ENCODE measurements at regions of chrX and their contacts with region 1.

Region 1: DNA sequence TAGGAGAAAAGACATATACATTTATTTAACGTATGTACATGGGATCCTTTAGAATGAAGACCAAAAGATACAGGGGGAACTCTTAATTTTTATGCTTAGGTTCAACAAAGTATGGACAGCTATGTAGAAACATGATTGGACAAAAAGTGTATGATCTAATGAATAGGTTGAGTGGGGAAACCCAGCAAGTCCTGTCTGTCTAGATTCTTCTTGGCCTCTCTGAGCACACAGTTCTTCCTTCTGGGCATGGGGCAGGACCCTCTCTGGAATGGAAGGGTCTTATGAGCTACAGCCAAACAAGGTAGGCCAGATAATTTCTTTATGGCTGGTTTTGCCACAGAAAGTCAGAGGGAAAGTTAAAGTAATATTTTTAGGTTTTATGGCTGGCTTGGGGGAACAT is 250.9 kb downstream of the IL1RAPL2 start:
- DNase-seq: no peak
- ATAC-seq: no peak
- H3K4me3 ChIP-seq: no peak overlapping the region
- H3K27ac ChIP-seq: no peak overlapping the region
- H3K4me1 ChIP-seq: no peaks in the 10 kb centered on the region
- H3K27me3 ChIP-seq: no peaks in the 10 kb centered on the region
- CTCF ChIP-seq: no peak

Region 2: GRCh38 chrX:104641183-104641582 is 175.8 kb before region 1 on chrX:
- CTCF ChIA-PET with region 1: no interaction called
- POLR2A ChIA-PET with region 1: no interaction called
- in situ Hi-C with region 1: no loop called
- intact Hi-C with region 1: no loop called
- DNase-seq: no peak
- ATAC-seq: no peak
- H3K4me3 ChIP-seq: no peak overlapping the region
- H3K27ac ChIP-seq: no peak overlapping the region
- H3K4me1 ChIP-seq: no peaks in the 10 kb centered on the region
- H3K27me3 ChIP-seq: no peaks in the 10 kb centered on the region
- CTCF ChIP-seq: no peak

Region 3: DNA sequence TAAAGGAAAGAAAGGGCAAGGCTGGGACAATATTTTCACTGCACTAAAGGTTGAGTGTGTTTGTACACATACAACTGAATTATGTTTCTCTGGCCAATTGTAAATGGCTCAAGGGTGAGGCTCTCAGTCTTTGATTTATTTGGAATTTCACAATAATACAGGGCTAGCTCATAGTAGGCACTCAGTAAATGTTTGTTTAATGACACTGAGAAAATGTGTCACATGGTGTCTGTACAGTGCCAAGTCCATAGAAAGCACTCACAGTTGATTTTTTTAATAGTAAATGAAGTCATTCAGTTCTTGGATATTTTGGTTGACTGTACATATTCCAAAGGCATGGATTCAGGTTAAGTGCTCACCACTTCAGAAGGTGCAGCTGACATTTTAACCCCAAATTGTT is 74.6 kb before region 1 on chrX:
- CTCF ChIA-PET with region 1: no interaction called
- POLR2A ChIA-PET with region 1: no interaction called
- in situ Hi-C with region 1: no loop called
- intact Hi-C with region 1: loop called (anchors 2 kb)
- DNase-seq: no peak
- ATAC-seq: no peak
- H3K4me3 ChIP-seq: no peak overlapping the region
- H3K27ac ChIP-seq: no peak overlapping the region
- H3K4me1 ChIP-seq: no peaks in the 10 kb centered on the region
- H3K27me3 ChIP-seq: no peaks in the 10 kb centered on the region
- CTCF ChIP-seq: no peak

Region 4: DNA sequence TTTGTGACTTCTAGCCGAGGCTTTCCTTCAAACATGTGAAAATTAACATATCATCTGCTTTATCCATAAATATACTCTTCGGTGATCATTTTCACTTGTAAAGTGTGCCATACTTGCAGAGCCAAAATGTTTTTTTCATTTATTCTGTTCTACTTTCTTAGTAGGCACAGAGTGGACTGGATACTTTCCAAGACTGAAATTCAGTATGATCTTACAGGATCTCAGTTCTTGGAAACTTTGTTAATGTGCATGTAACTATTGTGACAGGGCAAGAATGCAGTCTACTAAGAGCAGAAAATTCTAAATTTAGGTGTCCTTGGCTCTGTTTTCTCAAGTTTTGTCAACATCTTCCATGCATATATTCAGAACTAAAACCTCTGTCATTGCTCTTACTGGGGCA is 118.6 kb after region 1 on chrX:
- CTCF ChIA-PET with region 1: no interaction called
- POLR2A ChIA-PET with region 1: interaction called, 22 read pairs
- in situ Hi-C with region 1: no loop called
- intact Hi-C with region 1: no loop called
- DNase-seq: no peak
- ATAC-seq: no peak
- H3K4me3 ChIP-seq: no peak overlapping the region
- H3K27ac ChIP-seq: no peak overlapping the region
- H3K4me1 ChIP-seq: no peaks in the 10 kb centered on the region
- H3K27me3 ChIP-seq: no peaks in the 10 kb centered on the region
- CTCF ChIP-seq: no peak

Measured in Panc1 (cell line).